Activated T-helper 2 cell treated with anti-CD3 and anti-CD28 coated beads, Interferon-gamma antibody, Interleukin-2, Interleukin-4, amounts not matched to agents 10 μg/mL and 5 μg/mL and 100 μg/mL, durations not matched to agents 14 hours and 24 hours and 36 hours (primary cell): ENCODE measurements at regions of chr7 and their contacts with region 1.

Region 1: GRCh38 chr7:17021180-17021579 is 139.4 kb upstream of the AGR3 start:
- DNase-seq: no peak
- H3K4me3 Mint-ChIP-seq: no peak overlapping the region
- H3K27ac Mint-ChIP-seq: no peak overlapping the region
- H3K4me1 Mint-ChIP-seq: peaks cover 21% of the 10 kb centered on the region
- H3K27me3 Mint-ChIP-seq: peaks cover 3% of the 10 kb centered on the region

Region 2: GRCh38 chr7:16926283-16926682 is 94.9 kb before region 1 on chr7:
- intact Hi-C with region 1: loop called (anchors 1 kb)
- DNase-seq: no peak
- H3K4me3 Mint-ChIP-seq: no peak overlapping the region
- H3K27ac Mint-ChIP-seq: peak overlapping the region; percentile 43
- H3K4me1 Mint-ChIP-seq: peaks cover 62% of the 10 kb centered on the region
- H3K27me3 Mint-ChIP-seq: no peaks in the 10 kb centered on the region

Region 3: DNA sequence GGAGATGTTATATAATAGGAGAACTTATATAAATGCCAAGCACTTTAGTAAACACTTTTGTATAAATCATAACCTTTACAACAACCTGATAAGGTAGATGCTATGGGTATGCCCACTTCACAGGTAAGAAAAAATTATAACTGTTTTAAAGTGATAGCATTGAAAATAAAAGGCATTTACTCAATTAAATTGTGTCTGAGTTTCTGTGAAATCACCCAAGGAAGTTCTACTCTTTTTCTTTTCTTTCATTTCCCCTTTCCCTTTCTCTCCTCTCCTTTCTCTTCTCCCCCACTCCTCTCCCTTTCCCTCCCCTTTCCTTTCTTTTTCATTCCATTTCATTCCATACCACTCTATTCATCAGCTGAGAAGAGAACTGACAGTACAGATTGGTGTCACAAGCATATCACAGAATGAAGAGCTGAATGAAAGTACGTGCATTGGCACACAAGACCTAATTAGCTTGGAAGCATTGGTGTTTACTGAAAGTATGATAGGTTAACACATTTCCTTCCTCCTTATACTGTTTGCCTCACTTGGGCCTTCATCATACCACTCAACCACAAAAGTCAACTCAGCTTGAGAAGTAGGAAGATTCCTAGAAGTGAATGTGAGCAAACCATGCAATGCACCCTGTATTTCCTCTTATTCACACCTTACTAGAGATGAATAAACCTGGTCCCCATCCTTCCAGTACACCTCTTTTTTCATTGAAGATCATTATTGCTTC is 21.5 kb before region 1 on chr7:
- intact Hi-C with region 1: loop called (anchors 1 kb)
- DNase-seq: peak; percentile 15
- H3K4me3 Mint-ChIP-seq: peak overlapping the region; percentile 53
- H3K27ac Mint-ChIP-seq: peak overlapping the region; percentile 77
- H3K4me1 Mint-ChIP-seq: peaks cover 33% of the 10 kb centered on the region
- H3K27me3 Mint-ChIP-seq: peaks cover 2% of the 10 kb centered on the region

Region 4: DNA sequence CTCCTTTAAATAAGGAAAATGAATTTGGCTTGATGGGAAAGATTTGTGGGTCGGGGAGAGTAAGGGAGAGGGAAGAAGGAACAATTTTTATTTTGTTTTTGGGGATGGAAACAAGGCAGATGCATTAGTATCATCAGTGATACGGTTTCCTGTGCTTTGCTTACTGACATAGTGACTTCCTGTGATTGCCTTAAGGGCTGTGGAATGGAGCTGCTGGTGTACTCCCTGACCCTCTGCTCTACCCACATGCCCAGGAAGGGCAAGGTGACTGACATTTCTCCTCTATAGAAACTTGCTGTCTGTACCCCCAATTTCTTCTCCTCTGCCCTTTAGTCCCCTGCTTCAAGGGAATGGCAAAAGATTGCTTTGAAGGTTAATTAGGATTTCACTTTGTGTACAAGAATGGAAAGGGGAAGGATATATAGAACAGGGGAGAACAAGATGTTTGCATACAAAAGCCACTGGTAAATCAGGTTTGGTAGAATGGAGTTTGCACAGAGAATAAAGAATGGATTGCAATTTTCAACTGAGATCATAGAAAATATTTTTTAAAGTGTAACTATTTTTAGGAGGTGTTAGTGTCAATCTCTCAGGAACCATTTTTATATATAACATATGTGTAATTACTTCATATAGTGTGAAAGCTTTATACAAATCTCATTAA is 10.4 kb before region 1 on chr7:
- intact Hi-C with region 1: no loop called
- DNase-seq: no peak
- H3K4me3 Mint-ChIP-seq: no peak overlapping the region
- H3K27ac Mint-ChIP-seq: no peak overlapping the region
- H3K4me1 Mint-ChIP-seq: peaks cover 32% of the 10 kb centered on the region
- H3K27me3 Mint-ChIP-seq: peaks cover 2% of the 10 kb centered on the region

Region 5: GRCh38 chr7:17041324-17041723 is 20.1 kb after region 1 on chr7:
- intact Hi-C with region 1: loop called (anchors 1 kb)
- DNase-seq: no peak
- H3K4me3 Mint-ChIP-seq: peak overlapping the region; percentile 13
- H3K27ac Mint-ChIP-seq: peak overlapping the region; percentile 57
- H3K4me1 Mint-ChIP-seq: peaks cover 53% of the 10 kb centered on the region
- H3K27me3 Mint-ChIP-seq: peaks cover 2% of the 10 kb centered on the region

Region 6: DNA sequence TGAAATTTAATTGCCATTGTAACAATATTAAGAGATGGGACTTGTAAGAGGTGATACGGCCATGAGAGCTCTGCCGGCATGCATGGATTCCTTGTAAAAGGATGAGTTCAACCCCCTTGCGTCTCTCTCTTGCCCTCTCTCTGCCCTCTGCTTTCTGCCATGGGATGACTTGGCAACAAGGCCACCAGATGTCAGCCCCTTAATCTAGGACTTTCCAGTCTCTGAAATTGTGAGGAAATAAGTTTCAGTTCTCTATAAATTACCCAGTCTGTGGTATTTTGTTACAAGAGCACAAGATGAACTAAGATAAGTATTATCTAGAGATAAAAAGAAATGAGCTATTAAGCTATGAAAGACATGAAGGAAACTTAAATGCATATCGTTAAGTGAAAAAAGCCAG is 131.5 kb after region 1 on chr7:
- intact Hi-C with region 1: loop called (anchors 2 kb)
- DNase-seq: no peak
- H3K4me3 Mint-ChIP-seq: no peak overlapping the region
- H3K27ac Mint-ChIP-seq: peak overlapping the region; percentile 31
- H3K4me1 Mint-ChIP-seq: peaks cover 52% of the 10 kb centered on the region
- H3K27me3 Mint-ChIP-seq: no peaks in the 10 kb centered on the region

Region 7: GRCh38 chr7:17713584-17713983 is 692.4 kb after region 1 on chr7:
- intact Hi-C with region 1: no loop called
- DNase-seq: no peak
- H3K4me3 Mint-ChIP-seq: no peak overlapping the region
- H3K27ac Mint-ChIP-seq: no peak overlapping the region
- H3K4me1 Mint-ChIP-seq: no peaks in the 10 kb centered on the region
- H3K27me3 Mint-ChIP-seq: peaks cover 13% of the 10 kb centered on the region